GM18951 (cell line): ENCODE measurements at regions of chr11 and their contacts with region 1.

Region 1: GRCh38 chr11:122796128-122796717 is 42.1 kb upstream of the CRTAM start:
- POLR2A ChIP-seq: no peak

Region 2: GRCh38 chr11:122453586-122453985 is 342.6 kb before region 1 on chr11:
- in situ Hi-C with region 1: no loop called
- POLR2A ChIP-seq: no peak

Region 3: GRCh38 chr11:122853971-122854446 is 57.8 kb after region 1 on chr11:
- in situ Hi-C with region 1: loop called (anchors 5 kb)
- POLR2A ChIP-seq: no peak

Region 4: GRCh38 chr11:123174196-123175183 is 378.3 kb after region 1 on chr11:
- in situ Hi-C with region 1: no loop called
- POLR2A ChIP-seq: no peak